ENCODE measurements at regions of chr2 and their contacts with region 1.

Region 1: DNA sequence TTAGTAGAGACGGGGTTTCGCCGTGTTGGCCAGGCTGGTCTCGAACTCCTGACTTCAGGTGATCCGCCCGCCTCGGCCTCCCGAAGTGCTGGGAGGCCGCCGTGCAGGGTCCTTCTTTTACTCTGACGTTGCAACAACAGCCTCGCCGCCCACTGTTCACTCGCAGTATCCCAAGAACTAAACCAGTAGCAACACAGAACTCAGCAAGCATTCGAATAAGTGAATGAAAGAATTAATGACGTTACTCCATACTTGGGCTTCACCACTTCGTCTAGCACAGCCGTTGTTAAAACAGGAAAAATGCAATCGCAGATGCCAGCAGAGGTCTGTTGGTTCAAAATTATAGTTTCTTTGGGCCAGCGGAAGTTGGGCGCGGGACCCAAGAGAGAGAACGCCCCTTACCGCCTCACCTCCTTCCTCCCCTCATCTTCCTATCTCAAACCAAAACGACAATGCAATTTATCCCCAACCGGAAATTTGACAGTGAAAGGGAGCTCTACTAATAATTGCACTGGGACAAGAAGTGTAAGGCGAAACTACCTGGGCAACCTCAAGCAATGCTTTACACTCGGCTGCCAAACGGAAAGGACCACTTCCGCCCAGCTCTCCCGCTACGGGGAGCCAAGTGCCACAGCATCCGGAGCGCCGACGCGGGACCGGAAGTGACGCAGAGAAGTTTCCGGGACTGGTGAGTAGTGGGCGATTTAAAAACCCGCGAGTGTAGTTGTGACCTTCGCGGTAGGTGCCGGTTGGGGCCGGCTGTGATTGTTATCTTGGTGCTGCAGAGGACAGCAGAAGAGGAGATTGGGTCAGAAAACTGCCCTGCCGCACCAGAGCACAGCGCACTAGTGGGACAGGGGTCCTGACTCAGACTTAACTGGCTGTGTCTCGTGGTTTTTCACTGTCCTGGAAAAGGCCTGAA is at the starts of genes NIF3L1 and PPIL3:
- DNase-seq: peak; percentile 91 to 98
- H3K4me3 ChIP-seq: peak within 1 kb of the TSS; percentile 79 to 81
- H3K27ac ChIP-seq: peak within 1 kb of the TSS; percentile 90 to 94
- H3K4me1 ChIP-seq: peaks cover 7 to 17% of the 10 kb centered on the region in 2 donors
- H3K27me3 ChIP-seq: no peaks in the 10 kb centered on the region
- CTCF ChIP-seq: peak in 1 of 3 experiments; percentile 15
- total RNA-seq, gene NIF3L1: 55.3 TPM
- total RNA-seq, gene PPIL3: 0.64 TPM

Region 2: DNA sequence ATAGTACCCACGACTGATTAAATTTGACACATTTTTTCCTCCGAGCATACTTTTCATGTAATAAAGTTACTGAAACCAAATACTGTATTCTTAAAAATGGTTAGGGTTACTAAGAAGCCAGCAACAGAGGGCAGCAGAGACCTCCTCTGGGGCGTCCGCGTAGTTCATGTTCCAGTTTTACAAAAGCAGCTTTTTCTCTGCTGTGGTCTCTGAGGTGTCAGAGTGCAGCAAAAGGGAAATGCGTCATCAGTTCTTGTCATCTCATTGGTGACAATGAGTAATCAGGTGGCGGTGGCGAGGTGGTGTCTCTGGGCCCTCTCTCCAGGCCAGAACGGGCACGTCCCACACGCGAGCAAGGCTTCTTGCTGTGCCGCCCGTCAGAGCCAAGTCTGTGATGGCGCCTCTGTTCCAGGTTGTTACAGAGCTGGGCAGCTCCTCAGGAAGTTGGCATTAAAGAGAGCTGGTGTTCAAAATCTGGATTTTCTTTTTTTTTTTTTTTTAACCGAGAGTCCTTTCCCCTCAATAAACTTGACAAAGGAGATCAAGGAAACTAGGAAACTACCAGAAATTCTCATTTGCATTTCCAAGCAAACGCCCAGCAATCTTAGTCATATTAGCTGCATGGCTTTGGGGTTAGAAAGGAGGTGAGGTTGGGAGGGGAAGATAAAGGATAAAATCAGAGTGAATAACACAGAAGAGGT is 175.8 kb before region 1 on chr2:
- intact Hi-C with region 1: loop called (anchors 2 kb)
- DNase-seq: peak; percentile 81 to 95
- H3K4me3 ChIP-seq: peak overlapping the region; percentile 37 to 48
- H3K27ac ChIP-seq: peak overlapping the region; percentile 70 to 85
- H3K4me1 ChIP-seq: peaks cover 3% of the 10 kb centered on the region in 2 donors
- H3K27me3 ChIP-seq: no peaks in the 10 kb centered on the region
- CTCF ChIP-seq: peak; percentile 74 to 90 (median 82)

Region 3: DNA sequence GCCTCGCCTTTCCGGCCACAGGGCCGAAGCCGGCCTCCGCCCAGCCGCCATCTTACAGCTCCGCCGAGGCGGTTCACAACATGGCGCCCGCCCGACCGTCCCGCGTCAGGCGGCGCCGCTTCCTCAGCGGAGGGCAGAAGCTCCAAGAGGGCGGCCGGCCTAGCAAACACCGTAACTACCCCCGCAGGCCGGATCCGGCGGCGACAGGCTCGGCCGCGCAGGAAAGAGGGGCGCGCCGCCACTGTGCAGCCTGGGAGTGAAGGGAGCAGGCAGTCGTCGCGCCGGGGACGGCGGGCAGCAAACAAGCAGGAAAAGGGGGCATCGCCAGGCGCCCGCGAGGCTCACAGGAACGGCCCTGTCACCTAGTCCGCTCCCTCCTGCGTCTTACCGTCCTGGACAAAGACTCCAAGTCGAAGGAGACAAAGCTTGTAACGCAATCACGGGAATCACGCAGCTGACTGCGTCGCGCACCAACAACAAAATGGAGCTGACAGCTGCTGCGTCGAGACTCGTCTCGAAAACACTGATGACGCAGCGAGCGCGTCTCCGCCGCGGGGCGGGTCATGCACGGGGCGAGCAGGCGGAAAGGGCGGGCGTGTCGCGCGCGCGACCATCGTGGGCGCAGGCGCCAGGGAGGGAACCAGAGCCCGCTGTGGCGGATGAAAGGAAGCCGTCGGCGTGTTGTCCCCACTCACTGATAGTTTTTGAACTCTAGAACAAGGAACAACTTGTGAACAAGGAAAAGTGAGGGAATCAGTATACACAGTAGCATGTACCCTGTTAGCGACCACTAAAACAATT is 24.6 kb before region 1 on chr2 and contains the start of gene CLK1:
- intact Hi-C with region 1: loop called (anchors 1 kb)
- DNase-seq: peak; percentile 89 to 99
- H3K4me3 ChIP-seq: peak within 1 kb of the TSS; percentile 74 to 80
- H3K27ac ChIP-seq: peak within 1 kb of the TSS; percentile 96 to 100
- H3K4me1 ChIP-seq: peaks cover 0 to 23% of the 10 kb centered on the region in 2 donors
- H3K27me3 ChIP-seq: no peaks in the 10 kb centered on the region
- CTCF ChIP-seq: no peak
- total RNA-seq, gene CLK1: 43.5 TPM

Region 4: GRCh38 chr2:201071479-201072200 is 182.7 kb after region 1 on chr2 and contains the starts of genes HYCC2 and NDUFB3:
- intact Hi-C with region 1: loop called (anchors 5 kb)
- DNase-seq: peak; percentile 79 to 95
- H3K4me3 ChIP-seq: peak within 1 kb of the TSS; percentile 87 to 93
- H3K27ac ChIP-seq: peak within 1 kb of the TSS; percentile 80 to 84
- H3K4me1 ChIP-seq: peaks cover 12 to 18% of the 10 kb centered on the region in 2 donors
- H3K27me3 ChIP-seq: no peaks in the 10 kb centered on the region
- CTCF ChIP-seq: peak in 2 of 3 experiments; percentile 12 to 40
- total RNA-seq, gene HYCC2: 2.1 TPM
- total RNA-seq, gene NDUFB3: 34.2 TPM